Right ventricle myocardium superior (tissue), 1 donor: ENCODE measurements at regions of chr6 and their contacts with region 1.

Region 1: GRCh38 chr6:152206072-152206818 is 398.8 kb downstream of the ESR1 start:
- DNase-seq: peak; percentile 51
- ATAC-seq: no peak

Region 2: GRCh38 chr6:152151920-152152319 is 54.3 kb before region 1 on chr6:
- intact Hi-C with region 1: loop called (anchors 10 kb)
- DNase-seq: no peak
- ATAC-seq: no peak